ENCODE measurements at regions of chr6 and their contacts with region 1.

Region 1: GRCh38 chr6:79536954-79537747 is at the start of gene LCA5:
- DNase-seq: peak; percentile 97
- H3K4me3 ChIP-seq: peak within 1 kb of the TSS; percentile 72 to 75
- H3K27ac ChIP-seq: peak within 1 kb of the TSS; percentile 89 to 91
- H3K4me1 ChIP-seq: no peaks in the 10 kb centered on the region
- H3K27me3 ChIP-seq: no peaks in the 10 kb centered on the region
- CTCF ChIP-seq: no peak
- POLR2A ChIP-seq: peak; percentile 83
- total RNA-seq, gene LCA5: 4.9 to 11.2 TPM

Region 2: DNA sequence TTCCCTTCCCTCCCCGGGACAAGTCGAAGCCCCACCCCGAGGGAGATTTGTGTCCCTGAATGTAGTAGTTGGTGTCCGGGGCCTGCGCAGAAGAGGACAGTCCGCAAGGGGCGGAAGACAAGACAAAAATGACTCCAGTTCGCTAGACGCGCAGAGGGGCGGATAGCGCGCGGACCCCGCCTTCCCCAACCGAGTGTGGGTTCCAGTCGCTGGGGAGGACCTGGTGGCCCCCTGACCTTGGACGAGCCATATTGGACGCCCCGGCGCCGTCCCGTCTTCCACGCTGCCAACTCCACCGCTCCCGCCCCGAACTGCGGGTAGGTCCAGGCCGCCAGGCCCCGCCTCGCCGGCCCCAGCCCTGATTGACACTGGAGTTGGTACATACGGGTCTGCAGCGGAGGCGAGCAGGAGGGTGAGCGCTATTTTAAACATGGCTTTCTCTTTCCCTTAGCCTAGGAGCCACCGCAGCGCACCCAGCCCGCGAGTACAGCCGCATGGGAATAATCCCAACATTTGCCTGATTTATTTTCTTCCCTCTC is 303.5 kb before region 1 on chr6:
- intact Hi-C with region 1: loop called (anchors 5 kb)
- DNase-seq: peak; percentile 85
- H3K4me3 ChIP-seq: peak overlapping the region; percentile 59 to 67
- H3K27ac ChIP-seq: peak overlapping the region; percentile 88 to 91
- H3K4me1 ChIP-seq: no peaks in the 10 kb centered on the region
- H3K27me3 ChIP-seq: no peaks in the 10 kb centered on the region
- CTCF ChIP-seq: peak in 2 of 4 experiments; percentile 48 to 57
- POLR2A ChIP-seq: peak; percentile 50

Measured in prostate gland (tissue), 2 donors.